Panc1 (cell line): ENCODE measurements at regions of chr1 and their contacts with region 1.

Region 1: GRCh38 chr1:236489710-236490377 is 33.9 kb upstream of the LGALS8 start:
- DNase-seq: peak; percentile 24
- ATAC-seq: peak; percentile 77
- H3K4me3 ChIP-seq: no peak overlapping the region
- H3K27ac ChIP-seq: peak overlapping the region; percentile 89
- H3K4me1 ChIP-seq: peaks cover 36% of the 10 kb centered on the region
- H3K27me3 ChIP-seq: no peaks in the 10 kb centered on the region
- CTCF ChIP-seq: peak; percentile 71

Region 2: GRCh38 chr1:235739124-235739523 is 750.7 kb before region 1 on chr1:
- CTCF ChIA-PET with region 1: no interaction called
- POLR2A ChIA-PET with region 1: no interaction called
- in situ Hi-C with region 1: no loop called
- intact Hi-C with region 1: no loop called
- DNase-seq: peak; percentile 33
- ATAC-seq: peak; percentile 72
- H3K4me3 ChIP-seq: no peak overlapping the region
- H3K27ac ChIP-seq: no peak overlapping the region
- H3K4me1 ChIP-seq: no peaks in the 10 kb centered on the region
- H3K27me3 ChIP-seq: no peaks in the 10 kb centered on the region
- CTCF ChIP-seq: no peak

Region 3: DNA sequence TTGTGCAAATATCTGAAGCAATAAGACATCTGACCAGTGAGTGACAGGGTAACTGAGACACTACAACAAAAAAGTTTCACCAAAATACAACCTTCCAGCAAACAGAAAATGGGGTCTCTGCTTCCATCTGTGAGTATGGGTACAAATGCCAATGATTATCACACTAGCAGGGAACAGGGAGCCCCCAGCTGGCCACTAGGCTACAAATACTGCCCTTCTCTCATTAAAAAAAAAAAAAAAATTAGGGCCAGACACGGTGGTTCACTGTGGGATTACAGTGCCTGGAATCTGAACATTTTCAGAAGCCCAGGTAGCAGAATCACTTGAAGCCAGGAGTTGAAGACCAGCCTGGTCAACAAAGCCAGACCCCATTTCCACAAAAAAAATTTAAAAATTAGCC is 144.1 kb before region 1 on chr1:
- CTCF ChIA-PET with region 1: no interaction called
- POLR2A ChIA-PET with region 1: no interaction called
- in situ Hi-C with region 1: loop called (anchors 10 kb)
- intact Hi-C with region 1: no loop called
- DNase-seq: no peak
- ATAC-seq: peak; percentile 44; the same call in 1 of the 2 replicates
- H3K4me3 ChIP-seq: no peak overlapping the region
- H3K27ac ChIP-seq: peak overlapping the region; percentile 77; the same call in 1 of the 2 replicates
- H3K4me1 ChIP-seq: peaks cover 18% of the 10 kb centered on the region
- H3K27me3 ChIP-seq: no peaks in the 10 kb centered on the region
- CTCF ChIP-seq: peak; percentile 66

Region 4: GRCh38 chr1:236440373-236440772 is 49.5 kb before region 1 on chr1:
- CTCF ChIA-PET with region 1: no interaction called
- POLR2A ChIA-PET with region 1: no interaction called
- in situ Hi-C with region 1: no loop called
- intact Hi-C with region 1: no loop called
- DNase-seq: no peak
- ATAC-seq: no peak
- H3K4me3 ChIP-seq: no peak overlapping the region
- H3K27ac ChIP-seq: no peak overlapping the region
- H3K4me1 ChIP-seq: no peaks in the 10 kb centered on the region
- H3K27me3 ChIP-seq: no peaks in the 10 kb centered on the region
- CTCF ChIP-seq: no peak

Region 5: GRCh38 chr1:236581528-236581927 is 91.7 kb after region 1 on chr1:
- CTCF ChIA-PET with region 1: no interaction called
- POLR2A ChIA-PET with region 1: no interaction called
- in situ Hi-C with region 1: no loop called
- intact Hi-C with region 1: no loop called
- DNase-seq: no peak
- ATAC-seq: no peak
- H3K4me3 ChIP-seq: no peak overlapping the region
- H3K27ac ChIP-seq: no peak overlapping the region
- H3K4me1 ChIP-seq: no peaks in the 10 kb centered on the region
- H3K27me3 ChIP-seq: no peaks in the 10 kb centered on the region
- CTCF ChIP-seq: no peak

Region 6: GRCh38 chr1:236654957-236655356 is 165.1 kb after region 1 on chr1:
- CTCF ChIA-PET with region 1: no interaction called
- POLR2A ChIA-PET with region 1: no interaction called
- in situ Hi-C with region 1: no loop called
- intact Hi-C with region 1: no loop called
- DNase-seq: no peak
- ATAC-seq: no peak
- H3K4me3 ChIP-seq: no peak overlapping the region
- H3K27ac ChIP-seq: no peak overlapping the region
- H3K4me1 ChIP-seq: no peaks in the 10 kb centered on the region
- H3K27me3 ChIP-seq: no peaks in the 10 kb centered on the region
- CTCF ChIP-seq: no peak